Calu3 (cell line): ENCODE measurements at regions of chr17 and their contacts with region 1.

Region 1: GRCh38 chr17:79810130-79811010 is 13.5 kb upstream of the CBX8 start:
- DNase-seq: peak; percentile 88
- H3K4me3 Mint-ChIP-seq: peak overlapping the region; percentile 65
- H3K27ac Mint-ChIP-seq: peak overlapping the region; percentile 48
- H3K4me1 Mint-ChIP-seq: peaks cover 22% of the 10 kb centered on the region
- H3K27me3 Mint-ChIP-seq: peaks cover 52% of the 10 kb centered on the region
- CTCF ChIP-seq: no peak

Region 2: DNA sequence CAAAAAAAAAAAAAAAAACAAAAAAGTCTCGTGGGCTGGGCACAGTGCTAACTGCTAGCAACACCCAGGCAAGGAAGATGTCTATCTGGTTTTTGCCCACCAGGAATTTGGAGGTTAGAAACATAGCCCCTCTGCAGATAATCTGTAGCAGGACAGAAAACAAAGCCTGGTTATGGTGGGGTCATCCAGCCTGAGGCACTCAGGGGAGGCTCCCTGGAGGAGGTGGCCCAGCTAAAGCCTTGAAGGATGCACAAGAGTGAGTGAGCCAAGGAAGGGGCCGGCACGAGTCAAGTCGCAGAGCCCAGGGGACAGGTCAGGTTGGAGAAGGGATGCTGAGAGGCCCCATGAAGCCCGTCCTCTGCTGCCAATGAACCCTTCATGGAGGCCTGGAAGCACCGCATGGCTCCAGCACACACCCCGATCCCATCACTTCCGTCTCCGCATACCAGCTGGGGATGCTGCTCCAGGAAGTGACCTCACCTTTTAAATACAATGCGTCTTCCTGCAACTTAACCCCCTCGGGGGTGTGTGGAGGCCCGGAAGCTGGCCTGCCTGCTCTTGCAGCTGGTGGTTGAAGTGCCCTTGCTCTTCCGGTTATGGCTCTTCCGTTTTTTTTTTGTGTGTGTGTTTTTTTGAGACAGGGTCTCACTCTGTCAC is 649.3 kb before region 1 on chr17:
- CTCF ChIA-PET with region 1: no interaction called
- intact Hi-C with region 1: no loop called
- DNase-seq: peak; percentile 20
- H3K4me3 Mint-ChIP-seq: no peak overlapping the region
- H3K27ac Mint-ChIP-seq: no peak overlapping the region
- H3K4me1 Mint-ChIP-seq: no peaks in the 10 kb centered on the region
- H3K27me3 Mint-ChIP-seq: peaks cover 100% of the 10 kb centered on the region
- CTCF ChIP-seq: no peak

Region 3: DNA sequence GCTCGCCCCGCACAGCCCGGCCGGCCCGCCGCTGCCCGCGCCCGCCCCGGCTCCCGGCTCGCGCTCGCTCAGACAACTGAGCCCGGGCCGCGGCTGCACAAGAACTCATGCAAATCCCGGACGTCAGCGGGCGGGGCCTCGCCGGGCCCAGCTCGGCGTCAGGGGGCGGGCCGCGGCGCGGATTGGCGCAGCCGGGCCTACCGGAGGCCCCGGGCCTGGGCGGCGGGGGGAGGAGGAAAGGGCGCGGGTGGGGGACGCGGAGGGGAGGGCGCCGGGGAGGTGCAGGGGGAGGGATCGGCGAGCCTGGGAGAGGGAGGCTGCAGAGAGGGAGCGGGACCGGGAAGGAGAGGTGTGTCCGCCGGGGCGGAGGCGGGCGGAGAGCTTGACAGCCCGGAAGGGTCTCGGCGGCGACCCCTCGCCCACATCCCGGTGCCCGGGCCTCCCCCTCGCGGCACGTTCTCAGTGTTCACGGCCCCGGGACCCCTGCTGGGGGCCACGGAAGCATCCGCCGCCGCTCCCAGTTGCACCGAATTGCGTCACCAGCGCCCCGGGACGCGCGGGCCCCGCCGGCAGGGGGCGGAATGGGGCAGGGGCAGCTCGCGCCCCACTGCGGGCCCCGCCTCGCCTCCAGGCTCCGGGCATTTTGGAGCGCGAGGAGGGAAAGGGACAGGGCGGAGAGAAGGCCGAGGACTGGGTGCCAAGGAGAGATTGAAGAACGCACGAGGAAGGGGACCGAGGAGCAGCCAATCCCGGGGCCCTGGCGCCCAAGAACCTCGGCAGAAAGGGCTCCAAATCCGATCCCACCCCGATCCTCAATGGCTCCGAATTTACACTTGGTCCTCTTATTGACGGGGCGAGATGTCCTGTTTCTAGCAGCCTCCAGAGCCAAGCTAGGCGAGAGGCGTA is 29.2 kb after region 1 on chr17 and contains the start of gene CBX4:
- CTCF ChIA-PET with region 1: interaction called, 20 read pairs
- intact Hi-C with region 1: no loop called
- DNase-seq: peak; percentile 96
- H3K4me3 Mint-ChIP-seq: peak within 1 kb of the TSS; percentile 85
- H3K27ac Mint-ChIP-seq: peak within 1 kb of the TSS; percentile 74
- H3K4me1 Mint-ChIP-seq: peaks cover 15% of the 10 kb centered on the region
- H3K27me3 Mint-ChIP-seq: peaks cover 38% of the 10 kb centered on the region
- CTCF ChIP-seq: peak; percentile 97
- total RNA-seq, gene CBX4: 40.2 and 46.8 TPM in 2 replicates

Region 4: DNA sequence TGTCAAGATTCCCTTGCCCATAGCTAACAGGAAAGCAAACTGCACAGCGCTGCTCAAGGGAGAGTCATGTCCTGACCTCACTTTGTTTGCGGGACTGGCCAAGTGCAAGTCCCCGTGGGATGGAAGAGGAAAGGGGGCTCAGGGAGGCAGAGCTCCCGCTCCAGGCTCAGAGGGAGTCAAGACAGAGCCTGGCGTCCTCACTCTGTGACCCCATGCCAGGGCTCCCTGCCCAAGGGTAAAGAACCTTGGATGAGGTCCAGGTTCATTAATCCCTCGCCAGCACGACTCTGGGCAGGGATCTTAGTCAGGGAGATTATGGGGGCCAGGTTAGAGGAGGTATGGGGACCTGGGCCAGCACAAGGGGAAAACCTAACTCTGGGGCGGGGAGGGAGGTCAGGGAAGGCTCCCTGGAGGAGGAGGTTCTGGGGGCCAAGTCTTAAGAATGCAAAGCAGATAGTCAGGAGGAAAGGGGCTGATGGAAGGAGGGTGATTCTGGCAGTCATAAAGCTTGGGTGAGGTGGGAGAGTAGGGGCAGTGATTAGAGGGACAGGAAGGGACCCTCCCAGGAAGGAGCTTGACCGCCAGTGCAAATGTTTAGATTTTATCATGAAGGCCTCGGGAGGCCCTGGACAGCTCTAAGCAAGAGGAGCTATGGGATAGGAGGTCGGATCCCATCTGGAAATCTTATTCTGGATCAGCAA is 80.5 kb after region 1 on chr17:
- CTCF ChIA-PET with region 1: no interaction called
- intact Hi-C with region 1: no loop called
- DNase-seq: no peak
- H3K4me3 Mint-ChIP-seq: no peak overlapping the region
- H3K27ac Mint-ChIP-seq: no peak overlapping the region
- H3K4me1 Mint-ChIP-seq: peaks cover 18% of the 10 kb centered on the region
- H3K27me3 Mint-ChIP-seq: peaks cover 22% of the 10 kb centered on the region
- CTCF ChIP-seq: no peak

Region 5: GRCh38 chr17:80737106-80738019 is 927.0 kb after region 1 on chr17:
- CTCF ChIA-PET with region 1: no interaction called
- intact Hi-C with region 1: no loop called
- DNase-seq: no peak
- H3K4me3 Mint-ChIP-seq: no peak overlapping the region
- H3K27ac Mint-ChIP-seq: no peak overlapping the region
- H3K4me1 Mint-ChIP-seq: no peaks in the 10 kb centered on the region
- H3K27me3 Mint-ChIP-seq: no peaks in the 10 kb centered on the region
- CTCF ChIP-seq: no peak